SK-N-SH (cell line): ENCODE measurements at regions of chr2 and their contacts with region 1.

Region 1: GRCh38 chr2:27972311-27972710 is 81.8 kb downstream of the BABAM2 start:
- DNase-seq: no peak
- H3K4me3 ChIP-seq: no peak overlapping the region
- H3K27ac ChIP-seq: no peak overlapping the region
- H3K4me1 ChIP-seq: no peaks in the 10 kb centered on the region; a peak in 1 of 4 replicates
- H3K27me3 ChIP-seq: no peaks in the 10 kb centered on the region
- CTCF ChIP-seq: no peak
- EP300 ChIP-seq: no peak
- RAD21 ChIP-seq: no peak

Region 2: DNA sequence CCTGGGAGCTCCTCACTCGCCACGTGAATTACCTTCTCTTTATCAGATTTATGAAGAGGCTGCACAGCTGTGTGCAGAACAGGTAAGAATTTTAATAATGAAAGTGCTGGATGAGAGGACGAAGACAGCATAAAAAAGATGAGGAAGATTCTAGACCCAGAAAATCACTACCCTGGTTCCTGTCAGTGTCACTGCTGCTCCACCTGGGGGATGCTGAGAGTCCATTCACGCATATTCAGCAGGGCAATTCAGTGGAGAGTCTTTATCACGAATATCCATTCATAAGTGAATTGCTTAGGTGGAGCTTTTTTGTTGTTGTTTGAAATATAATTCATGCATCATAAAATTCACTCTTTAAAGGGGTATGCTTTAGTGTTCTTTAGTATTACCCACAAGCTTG is 148.7 kb before region 1 on chr2:
- CTCF ChIA-PET with region 1: no interaction called
- POLR2A ChIA-PET with region 1: no interaction called
- DNase-seq: no peak
- H3K4me3 ChIP-seq: no peak overlapping the region
- H3K27ac ChIP-seq: no peak overlapping the region
- H3K4me1 ChIP-seq: no peaks in the 10 kb centered on the region
- H3K27me3 ChIP-seq: no peaks in the 10 kb centered on the region
- CTCF ChIP-seq: no peak
- EP300 ChIP-seq: no peak
- RAD21 ChIP-seq: no peak

Region 3: GRCh38 chr2:27960237-27960912 is 11.9 kb before region 1 on chr2:
- CTCF ChIA-PET with region 1: interaction called, 10 read pairs
- POLR2A ChIA-PET with region 1: no interaction called
- DNase-seq: no peak
- H3K4me3 ChIP-seq: peak overlapping the region; percentile 25 to 39; a peak in 3 of 4 replicates
- H3K27ac ChIP-seq: peak overlapping the region; percentile 81 to 89; a peak in 3 of 4 replicates
- H3K4me1 ChIP-seq: peaks cover 8 to 43% of the 10 kb centered on the region in 2 experiments
- H3K27me3 ChIP-seq: no peaks in the 10 kb centered on the region
- CTCF ChIP-seq: no peak
- EP300 ChIP-seq: peak in 1 of 2 experiments; percentile 97; a peak in 2 of 4 replicates
- RAD21 ChIP-seq: no peak